A673 (cell line): ENCODE measurements at regions of chr18 and their contacts with region 1.

Region 1: GRCh38 chr18:70431203-70431624 is 142.4 kb downstream of the SOCS6 start:
- DNase-seq: no peak
- H3K4me3 ChIP-seq: no peak overlapping the region
- H3K27ac ChIP-seq: no peak overlapping the region
- H3K4me1 ChIP-seq: no peaks in the 10 kb centered on the region
- H3K27me3 ChIP-seq: no peaks in the 10 kb centered on the region
- CTCF ChIP-seq: no peak

Region 2: DNA sequence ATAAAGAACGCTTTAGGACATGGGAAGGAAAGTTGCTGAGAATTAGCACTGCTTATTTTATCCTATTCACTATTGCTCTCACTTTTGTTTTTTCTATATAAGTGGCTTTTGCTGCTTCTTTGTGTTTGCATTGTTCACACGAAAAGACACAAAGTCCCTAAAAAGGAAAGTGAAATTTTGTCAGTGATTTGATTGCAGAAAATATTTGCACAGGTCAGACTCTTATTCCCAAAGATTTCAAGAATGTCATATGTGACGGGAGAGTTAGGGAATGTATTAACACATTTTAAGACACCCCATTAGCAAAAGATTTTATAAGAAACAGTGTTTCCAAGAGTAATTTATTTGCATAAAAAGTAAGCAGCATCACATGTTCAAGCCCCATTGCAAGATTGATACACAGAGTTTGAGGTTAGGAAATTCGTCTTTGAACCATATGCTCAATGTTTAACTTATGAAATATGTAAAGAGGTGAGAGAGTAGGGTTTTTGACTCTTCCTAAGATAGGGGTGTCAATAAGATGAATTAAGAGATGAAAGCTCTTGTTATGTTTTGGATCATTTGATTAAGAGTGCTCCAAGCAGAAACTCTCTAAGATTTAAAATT is 1576.3 kb before region 1 on chr18:
- CTCF ChIA-PET with region 1: no interaction called
- POLR2A ChIA-PET with region 1: no interaction called
- intact Hi-C with region 1: loop called (anchors 10 kb)
- DNase-seq: no peak
- H3K4me3 ChIP-seq: no peak overlapping the region
- H3K27ac ChIP-seq: no peak overlapping the region
- H3K4me1 ChIP-seq: no peaks in the 10 kb centered on the region
- H3K27me3 ChIP-seq: no peaks in the 10 kb centered on the region
- CTCF ChIP-seq: no peak

Region 3: GRCh38 chr18:70082430-70082829 is 348.8 kb before region 1 on chr18:
- CTCF ChIA-PET with region 1: interaction called, 10 read pairs
- POLR2A ChIA-PET with region 1: no interaction called
- intact Hi-C with region 1: no loop called
- DNase-seq: no peak
- H3K4me3 ChIP-seq: no peak overlapping the region
- H3K27ac ChIP-seq: no peak overlapping the region
- H3K4me1 ChIP-seq: no peaks in the 10 kb centered on the region
- H3K27me3 ChIP-seq: no peaks in the 10 kb centered on the region
- CTCF ChIP-seq: no peak

Region 4: GRCh38 chr18:70195852-70196434 is 235.3 kb before region 1 on chr18:
- CTCF ChIA-PET with region 1: interaction called, 27 read pairs
- POLR2A ChIA-PET with region 1: no interaction called
- intact Hi-C with region 1: loop called (anchors 1 kb)
- DNase-seq: peak; percentile 57
- H3K4me3 ChIP-seq: no peak overlapping the region
- H3K27ac ChIP-seq: no peak overlapping the region
- H3K4me1 ChIP-seq: no peaks in the 10 kb centered on the region
- H3K27me3 ChIP-seq: no peaks in the 10 kb centered on the region
- CTCF ChIP-seq: peak; percentile 84

Region 5: GRCh38 chr18:70288851-70289328 is 142.3 kb before region 1 on chr18 and contains the start of gene SOCS6:
- CTCF ChIA-PET with region 1: no interaction called
- POLR2A ChIA-PET with region 1: no interaction called
- intact Hi-C with region 1: loop called (anchors 5 kb)
- DNase-seq: peak; percentile 78
- H3K4me3 ChIP-seq: peak within 1 kb of the TSS; percentile 72
- H3K27ac ChIP-seq: peak within 1 kb of the TSS; percentile 84
- H3K4me1 ChIP-seq: peaks cover 7% of the 10 kb centered on the region
- H3K27me3 ChIP-seq: no peaks in the 10 kb centered on the region
- CTCF ChIP-seq: no peak
- total RNA-seq, gene SOCS6: 15.5 and 20.1 TPM in 2 replicates

Region 6: DNA sequence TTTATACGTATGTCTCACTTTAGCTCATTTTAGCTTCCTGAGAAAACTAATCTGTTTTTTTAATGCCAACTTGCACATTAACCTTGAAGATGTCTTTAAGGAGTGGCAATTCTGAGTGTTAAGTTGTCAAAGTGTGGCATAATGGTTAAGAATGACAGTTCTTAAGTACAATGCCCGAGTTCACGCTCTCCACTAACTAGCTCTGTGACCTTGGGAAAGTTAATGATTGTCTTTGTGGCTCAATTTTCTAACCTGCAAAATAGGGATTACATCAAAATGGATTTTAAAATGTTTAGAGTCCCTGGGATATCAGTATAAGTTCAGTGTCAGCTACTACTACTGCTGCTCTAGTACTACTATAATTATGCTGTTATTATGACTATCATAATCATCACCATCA is 267.4 kb after region 1 on chr18:
- CTCF ChIA-PET with region 1: no interaction called
- POLR2A ChIA-PET with region 1: no interaction called
- intact Hi-C with region 1: no loop called
- DNase-seq: no peak
- H3K4me3 ChIP-seq: no peak overlapping the region
- H3K27ac ChIP-seq: peak overlapping the region; percentile 22
- H3K4me1 ChIP-seq: peaks cover 32% of the 10 kb centered on the region
- H3K27me3 ChIP-seq: no peaks in the 10 kb centered on the region
- CTCF ChIP-seq: no peak

Region 7: DNA sequence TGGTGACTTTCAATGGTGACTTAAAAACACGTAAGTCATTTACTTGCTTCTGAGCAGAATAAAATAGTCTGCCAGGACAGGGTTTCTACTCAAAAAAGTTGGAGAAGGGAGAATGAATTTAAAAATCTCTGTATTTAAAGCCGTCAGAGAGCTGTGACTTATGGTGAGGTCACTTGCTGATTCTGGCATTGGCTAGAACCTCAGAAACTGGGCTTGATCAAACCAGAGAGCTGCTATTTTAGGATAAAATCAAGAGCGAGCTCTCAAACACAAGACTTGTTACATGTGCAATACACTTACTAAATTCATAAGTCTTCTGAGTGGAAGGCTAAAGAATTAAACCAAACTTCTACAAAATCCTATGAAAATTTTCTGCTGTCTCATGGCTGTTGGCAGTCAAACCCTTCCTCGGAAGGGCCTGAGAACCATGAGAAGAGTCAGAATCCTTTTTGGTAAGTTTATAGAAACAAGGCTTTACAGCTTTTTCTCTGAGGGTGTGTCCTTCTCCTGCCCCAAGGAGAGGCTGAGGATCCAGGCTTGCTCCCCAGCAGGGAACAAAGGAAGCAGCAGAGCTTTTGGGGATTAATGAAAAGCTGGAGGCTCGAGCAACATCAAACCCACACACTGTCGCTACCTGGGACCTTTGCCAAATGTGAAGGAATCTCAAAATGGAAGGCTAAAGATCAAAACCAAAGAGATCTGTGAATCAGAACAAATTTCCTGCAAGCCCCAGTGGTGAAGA is 674.0 kb after region 1 on chr18:
- CTCF ChIA-PET with region 1: no interaction called
- POLR2A ChIA-PET with region 1: no interaction called
- intact Hi-C with region 1: no loop called
- DNase-seq: peak; percentile 70
- H3K4me3 ChIP-seq: no peak overlapping the region
- H3K27ac ChIP-seq: peak overlapping the region; percentile 45
- H3K4me1 ChIP-seq: peaks cover 22% of the 10 kb centered on the region
- H3K27me3 ChIP-seq: no peaks in the 10 kb centered on the region
- CTCF ChIP-seq: no peak